Ovary (tissue), 10 donors: ENCODE measurements at regions of chr6 and their contacts with region 1.

Region 1: DNA sequence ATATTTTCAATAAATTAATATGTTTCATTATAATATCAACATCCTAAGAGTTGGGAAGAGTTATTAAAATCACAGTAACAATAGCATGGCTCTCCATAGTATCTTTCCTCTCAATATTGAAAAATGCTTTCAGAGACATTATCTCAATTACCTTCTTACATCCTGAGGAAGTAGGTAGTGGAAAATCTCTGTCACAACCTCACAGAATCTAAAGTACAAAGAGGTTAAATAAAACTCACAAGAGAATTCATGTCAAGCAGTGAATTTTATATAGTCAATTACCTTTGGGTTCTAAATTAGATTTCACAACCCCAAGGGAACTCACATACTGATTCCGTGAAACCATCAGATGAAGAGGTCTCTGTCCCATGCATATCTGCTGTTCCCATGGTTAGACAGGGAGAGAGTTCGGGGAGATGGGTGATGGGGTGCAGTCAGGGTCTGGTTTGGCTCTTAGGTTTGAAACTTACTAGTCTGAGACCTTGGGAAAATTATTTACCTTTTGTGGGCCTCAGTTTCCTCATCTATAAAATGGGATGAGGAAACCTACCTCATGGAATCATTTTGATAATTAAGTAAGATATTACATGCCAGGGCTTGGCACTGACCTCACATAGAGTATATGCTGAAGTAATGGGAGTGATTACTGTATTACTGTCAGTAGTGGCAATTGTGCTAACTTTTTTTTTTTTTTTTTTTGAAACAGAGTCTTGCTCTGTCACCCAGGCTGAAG is 74.0 kb upstream of the SNX9 start:
- DNase-seq: no peak
- H3K4me3 ChIP-seq: no peak overlapping the region
- H3K27ac ChIP-seq: no peak overlapping the region
- H3K4me1 ChIP-seq: no peaks in the 10 kb centered on the region
- H3K27me3 ChIP-seq: no peaks in the 10 kb centered on the region
- CTCF ChIP-seq: no peak
- EP300 ChIP-seq: no peak
- POLR2A ChIP-seq: no peak

Region 2: DNA sequence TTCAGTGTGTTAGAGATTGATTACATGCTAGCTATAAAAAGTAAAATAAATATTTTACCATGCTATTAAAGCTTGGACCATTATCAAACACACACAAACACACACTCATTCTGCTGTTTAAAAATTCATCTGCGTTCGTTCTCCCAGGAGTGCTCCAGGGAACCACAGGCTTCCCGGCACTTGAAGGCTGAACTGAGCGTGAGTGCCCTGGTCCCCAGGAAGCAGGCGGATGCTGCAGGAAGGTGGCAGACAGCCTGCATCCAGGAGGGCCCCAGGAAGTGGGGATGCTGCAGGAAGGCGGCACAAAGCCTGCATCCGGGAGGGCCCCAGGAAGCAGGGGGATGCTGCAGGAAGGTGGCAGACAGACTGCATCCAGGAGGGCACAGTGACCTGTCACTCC is 73.2 kb before region 1 on chr6:
- intact Hi-C with region 1: loop called in 1 of 4 experiments (anchors 2 kb)
- DNase-seq: no peak
- H3K4me3 ChIP-seq: no peak overlapping the region
- H3K27ac ChIP-seq: no peak overlapping the region
- H3K4me1 ChIP-seq: no peaks in the 10 kb centered on the region
- H3K27me3 ChIP-seq: no peaks in the 10 kb centered on the region
- CTCF ChIP-seq: no peak
- EP300 ChIP-seq: no peak
- POLR2A ChIP-seq: no peak

Region 3: GRCh38 chr6:157849288-157850017 is 100.4 kb after region 1 on chr6:
- intact Hi-C with region 1: no loop called
- DNase-seq: no peak
- H3K4me3 ChIP-seq: no peak overlapping the region
- H3K27ac ChIP-seq: no peak overlapping the region
- H3K4me1 ChIP-seq: peaks cover 11% of the 10 kb centered on the region
- H3K27me3 ChIP-seq: no peaks in the 10 kb centered on the region
- CTCF ChIP-seq: no peak
- EP300 ChIP-seq: no peak
- POLR2A ChIP-seq: no peak